CD4-positive, alpha-beta T cell (primary cell): ENCODE measurements at regions of chr17 and their contacts with region 1.

Region 1: GRCh38 chr17:3865176-3865575 is 19.1 kb upstream of the NCBP3 start:
- DNase-seq: no peak
- ATAC-seq: no peak
- H3K4me3 ChIP-seq: no peak overlapping the region
- H3K4me3 Mint-ChIP-seq: no peak overlapping the region
- H3K27ac ChIP-seq: no peak overlapping the region
- H3K27ac Mint-ChIP-seq: no peak overlapping the region
- H3K4me1 ChIP-seq: no peaks in the 10 kb centered on the region
- H3K4me1 Mint-ChIP-seq: no peaks in the 10 kb centered on the region
- H3K27me3 ChIP-seq: no peaks in the 10 kb centered on the region
- H3K27me3 Mint-ChIP-seq: no peaks in the 10 kb centered on the region
- CTCF ChIP-seq: no peak

Region 2: GRCh38 chr17:3802461-3803307 is 62.5 kb before region 1 on chr17:
- CTCF ChIA-PET with region 1: no interaction called
- POLR2A ChIA-PET with region 1: no interaction called
- intact Hi-C with region 1: no loop called
- DNase-seq: peak in 2 of 14 experiments; percentile 25 to 39
- ATAC-seq: no peak
- H3K4me3 ChIP-seq: no peak overlapping the region
- H3K4me3 Mint-ChIP-seq: no peak overlapping the region
- H3K27ac ChIP-seq: no peak overlapping the region
- H3K27ac Mint-ChIP-seq: no peak overlapping the region
- H3K4me1 ChIP-seq: peaks cover 18% of the 10 kb centered on the region
- H3K4me1 Mint-ChIP-seq: peaks cover 3% of the 10 kb centered on the region
- H3K27me3 ChIP-seq: no peaks in the 10 kb centered on the region
- H3K27me3 Mint-ChIP-seq: no peaks in the 10 kb centered on the region
- CTCF ChIP-seq: no peak

Region 3: GRCh38 chr17:3879186-3879585 is 14.0 kb after region 1 on chr17:
- CTCF ChIA-PET with region 1: no interaction called
- POLR2A ChIA-PET with region 1: no interaction called
- intact Hi-C with region 1: no loop called
- DNase-seq: no peak
- ATAC-seq: no peak
- H3K4me3 ChIP-seq: no peak overlapping the region
- H3K4me3 Mint-ChIP-seq: no peak overlapping the region
- H3K27ac ChIP-seq: no peak overlapping the region
- H3K27ac Mint-ChIP-seq: no peak overlapping the region
- H3K4me1 ChIP-seq: no peaks in the 10 kb centered on the region
- H3K4me1 Mint-ChIP-seq: no peaks in the 10 kb centered on the region
- H3K27me3 ChIP-seq: no peaks in the 10 kb centered on the region
- H3K27me3 Mint-ChIP-seq: no peaks in the 10 kb centered on the region
- CTCF ChIP-seq: no peak

Region 4: GRCh38 chr17:3907483-3908216 is 42.5 kb after region 1 on chr17:
- CTCF ChIA-PET with region 1: interaction called, 4 read pairs
- POLR2A ChIA-PET with region 1: no interaction called
- intact Hi-C with region 1: loop called in 1 of 2 experiments (anchors 1 kb)
- DNase-seq: no peak
- ATAC-seq: no peak
- H3K4me3 ChIP-seq: no peak overlapping the region
- H3K4me3 Mint-ChIP-seq: no peak overlapping the region
- H3K27ac ChIP-seq: no peak overlapping the region
- H3K27ac Mint-ChIP-seq: no peak overlapping the region
- H3K4me1 ChIP-seq: peaks cover 12% of the 10 kb centered on the region
- H3K4me1 Mint-ChIP-seq: peaks cover 17% of the 10 kb centered on the region
- H3K27me3 ChIP-seq: no peaks in the 10 kb centered on the region
- H3K27me3 Mint-ChIP-seq: no peaks in the 10 kb centered on the region
- CTCF ChIP-seq: no peak

Region 5: GRCh38 chr17:3913531-3914311 is 48.5 kb after region 1 on chr17:
- CTCF ChIA-PET with region 1: interaction called, 4 read pairs
- POLR2A ChIA-PET with region 1: no interaction called
- intact Hi-C with region 1: loop called in 1 of 2 experiments (anchors 2 kb)
- DNase-seq: peak; percentile 68 to 89 (median 76)
- ATAC-seq: peak; percentile 61
- H3K4me3 ChIP-seq: no peak overlapping the region
- H3K4me3 Mint-ChIP-seq: no peak overlapping the region
- H3K27ac ChIP-seq: no peak overlapping the region
- H3K27ac Mint-ChIP-seq: peak overlapping the region; percentile 78
- H3K4me1 ChIP-seq: peaks cover 55% of the 10 kb centered on the region
- H3K4me1 Mint-ChIP-seq: peaks cover 50% of the 10 kb centered on the region
- H3K27me3 ChIP-seq: no peaks in the 10 kb centered on the region
- H3K27me3 Mint-ChIP-seq: no peaks in the 10 kb centered on the region
- CTCF ChIP-seq: peak; percentile 98

Region 6: DNA sequence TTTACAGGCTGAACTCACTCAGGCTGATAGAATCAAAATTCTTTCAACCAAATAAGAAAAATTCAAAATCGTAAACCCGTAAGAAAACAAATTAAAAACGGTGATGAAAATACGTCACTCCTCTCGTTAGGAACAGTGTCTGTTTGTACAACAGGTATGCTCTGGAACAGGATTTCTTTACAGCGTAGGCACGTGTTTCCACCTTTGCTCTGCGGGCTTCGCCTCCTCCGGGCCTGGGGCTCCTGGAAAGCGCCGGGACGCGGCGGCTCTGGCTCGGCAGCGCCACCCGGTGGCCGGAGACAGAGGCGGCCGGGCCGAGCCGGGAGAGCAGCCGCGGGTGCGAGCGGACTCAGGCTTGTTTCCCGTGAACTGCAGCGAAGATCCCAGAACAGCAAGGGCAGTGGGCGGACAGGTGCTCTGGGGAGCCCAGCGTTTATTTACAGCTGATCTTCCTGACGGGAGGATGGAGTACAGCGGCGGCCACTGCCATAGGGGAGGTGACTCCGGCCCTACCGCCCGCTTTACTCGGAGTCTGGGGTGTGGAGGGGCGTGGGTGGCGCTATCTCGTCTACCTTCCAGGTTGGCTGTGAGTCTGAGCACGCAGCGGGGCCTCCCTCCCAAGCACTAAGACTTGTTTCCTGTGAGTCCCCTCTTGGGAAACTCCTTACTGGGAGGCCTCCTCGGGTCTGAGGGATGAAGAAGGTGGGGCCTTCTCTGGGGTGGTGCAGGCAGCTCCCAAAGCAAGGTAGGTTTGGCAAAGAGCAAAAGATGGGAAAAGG is 139.5 kb after region 1 on chr17:
- CTCF ChIA-PET with region 1: interaction called, 3 read pairs
- POLR2A ChIA-PET with region 1: no interaction called
- intact Hi-C with region 1: loop called (anchors 1 kb)
- DNase-seq: peak; percentile 34 to 81 (median 54)
- ATAC-seq: peak; percentile 93
- H3K4me3 ChIP-seq: no peak overlapping the region
- H3K4me3 Mint-ChIP-seq: no peak overlapping the region
- H3K27ac ChIP-seq: no peak overlapping the region
- H3K27ac Mint-ChIP-seq: no peak overlapping the region
- H3K4me1 ChIP-seq: peaks cover 9% of the 10 kb centered on the region
- H3K4me1 Mint-ChIP-seq: peaks cover 8% of the 10 kb centered on the region
- H3K27me3 ChIP-seq: no peaks in the 10 kb centered on the region
- H3K27me3 Mint-ChIP-seq: no peaks in the 10 kb centered on the region
- CTCF ChIP-seq: peak; percentile 97

Region 7: DNA sequence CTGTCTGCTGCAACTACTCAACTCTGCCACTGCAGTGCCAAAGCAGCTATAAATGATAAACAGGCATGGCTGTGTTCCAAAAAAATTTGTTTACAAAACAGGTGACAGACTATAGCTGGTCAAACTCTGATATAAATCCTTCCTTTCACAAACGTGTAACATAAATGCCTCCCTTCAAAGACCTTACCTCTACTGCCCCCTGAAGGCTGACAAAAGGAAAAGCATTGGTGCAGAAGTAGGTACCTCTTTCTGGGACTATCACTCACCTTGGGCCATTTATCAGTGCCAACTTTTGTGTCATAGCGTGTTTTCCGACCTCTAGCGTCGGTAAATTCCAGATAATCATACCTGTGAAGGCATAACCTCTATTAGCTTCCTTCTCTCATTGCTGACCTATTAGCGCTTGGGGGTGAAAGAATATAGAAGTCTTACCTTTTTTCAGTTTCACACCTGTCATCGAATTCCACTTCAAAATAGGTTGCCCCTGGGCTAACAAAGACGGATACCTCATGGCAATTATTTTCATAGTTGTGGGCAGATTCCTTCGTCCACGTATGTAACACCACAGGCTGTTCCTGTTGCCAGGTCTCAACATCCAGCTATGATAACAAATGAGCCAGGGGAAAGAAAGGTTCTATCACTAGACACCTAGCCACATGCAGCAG is 209.8 kb after region 1 on chr17:
- CTCF ChIA-PET with region 1: no interaction called
- POLR2A ChIA-PET with region 1: no interaction called
- intact Hi-C with region 1: loop called (anchors 1 kb)
- DNase-seq: peak in 4 of 14 experiments; percentile 20 to 75 (median 67)
- ATAC-seq: peak; percentile 85
- H3K4me3 ChIP-seq: no peak overlapping the region
- H3K4me3 Mint-ChIP-seq: no peak overlapping the region
- H3K27ac ChIP-seq: no peak overlapping the region
- H3K27ac Mint-ChIP-seq: no peak overlapping the region
- H3K4me1 ChIP-seq: no peaks in the 10 kb centered on the region
- H3K4me1 Mint-ChIP-seq: no peaks in the 10 kb centered on the region
- H3K27me3 ChIP-seq: no peaks in the 10 kb centered on the region
- H3K27me3 Mint-ChIP-seq: no peaks in the 10 kb centered on the region
- CTCF ChIP-seq: peak; percentile 67